ENCODE measurements at regions of chr3 and their contacts with region 1.

Region 1: DNA sequence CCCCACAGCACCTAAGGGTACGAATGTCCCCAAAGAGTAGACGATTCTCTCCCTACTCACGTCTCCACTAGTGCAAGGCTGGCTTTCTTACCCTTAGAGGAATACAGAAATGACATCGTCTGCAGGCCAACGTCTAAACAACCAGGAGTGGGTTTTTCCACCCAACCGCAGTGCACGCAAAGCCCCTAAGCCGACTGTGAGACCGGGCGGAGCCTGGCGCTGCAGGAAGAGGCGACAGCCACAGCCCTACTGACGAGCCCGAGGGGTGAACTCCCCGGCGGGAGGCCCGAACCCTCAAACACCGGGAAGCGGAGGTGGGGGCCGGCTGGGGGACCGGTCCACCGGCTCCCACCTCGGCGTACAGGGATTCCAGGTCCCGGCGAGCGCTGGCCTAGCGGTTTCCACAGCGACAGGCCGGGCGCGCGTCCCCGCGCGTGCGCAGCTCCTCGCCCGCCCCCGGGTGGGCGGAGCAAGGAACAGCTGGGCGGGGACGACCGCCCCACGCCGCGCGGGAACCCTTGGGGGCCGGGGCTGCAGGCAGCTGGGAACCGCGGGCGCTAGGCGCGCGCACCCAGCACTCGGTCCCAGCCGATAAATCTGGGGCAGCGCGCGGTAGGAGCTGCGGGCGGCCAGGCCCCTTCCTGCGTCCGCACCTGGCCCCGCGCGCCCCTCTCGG is at the starts of genes CEP19 and PIGX:
- DNase-seq: peak; percentile 77 to 99 (median 91)
- ATAC-seq: peak; percentile 83
- H3K4me3 ChIP-seq: peak within 1 kb of the TSS; percentile 72 to 93
- H3K4me3 Mint-ChIP-seq: peak within 1 kb of the TSS; percentile 88
- H3K27ac ChIP-seq: peak within 1 kb of the TSS; percentile 90 to 98
- H3K27ac Mint-ChIP-seq: peak within 1 kb of the TSS; percentile 98
- H3K4me1 ChIP-seq: peaks cover 17% of the 10 kb centered on the region
- H3K4me1 Mint-ChIP-seq: peaks cover 31% of the 10 kb centered on the region
- H3K27me3 ChIP-seq: no peaks in the 10 kb centered on the region
- H3K27me3 Mint-ChIP-seq: no peaks in the 10 kb centered on the region
- CTCF ChIP-seq: no peak
- total RNA-seq, gene CEP19: 0.39 to 0.41 TPM
- total RNA-seq, gene PIGX: 12.0 to 12.2 TPM

Region 2: GRCh38 chr3:196632046-196632751 is 79.8 kb before region 1 on chr3:
- CTCF ChIA-PET with region 1: no interaction called
- POLR2A ChIA-PET with region 1: interaction called, 4 read pairs
- intact Hi-C with region 1: loop called (anchors 1 to 5 kb)
- DNase-seq: peak; percentile 70 to 96 (median 89)
- ATAC-seq: peak; percentile 79
- H3K4me3 ChIP-seq: peak overlapping the region; percentile 46 to 50
- H3K4me3 Mint-ChIP-seq: peak overlapping the region; percentile 80
- H3K27ac ChIP-seq: peak overlapping the region; percentile 56 to 80
- H3K27ac Mint-ChIP-seq: peak overlapping the region; percentile 93
- H3K4me1 ChIP-seq: peaks cover 36% of the 10 kb centered on the region
- H3K4me1 Mint-ChIP-seq: peaks cover 51% of the 10 kb centered on the region
- H3K27me3 ChIP-seq: no peaks in the 10 kb centered on the region
- H3K27me3 Mint-ChIP-seq: no peaks in the 10 kb centered on the region
- CTCF ChIP-seq: no peak

Measured in CD8-positive, alpha-beta T cell (primary cell).